Activated CD4-positive, alpha-beta T cell treated with anti-CD3 and anti-CD28 coated beads for 36 hours (primary cell): ENCODE measurements at regions of chr6 and their contacts with region 1.

Region 1: DNA sequence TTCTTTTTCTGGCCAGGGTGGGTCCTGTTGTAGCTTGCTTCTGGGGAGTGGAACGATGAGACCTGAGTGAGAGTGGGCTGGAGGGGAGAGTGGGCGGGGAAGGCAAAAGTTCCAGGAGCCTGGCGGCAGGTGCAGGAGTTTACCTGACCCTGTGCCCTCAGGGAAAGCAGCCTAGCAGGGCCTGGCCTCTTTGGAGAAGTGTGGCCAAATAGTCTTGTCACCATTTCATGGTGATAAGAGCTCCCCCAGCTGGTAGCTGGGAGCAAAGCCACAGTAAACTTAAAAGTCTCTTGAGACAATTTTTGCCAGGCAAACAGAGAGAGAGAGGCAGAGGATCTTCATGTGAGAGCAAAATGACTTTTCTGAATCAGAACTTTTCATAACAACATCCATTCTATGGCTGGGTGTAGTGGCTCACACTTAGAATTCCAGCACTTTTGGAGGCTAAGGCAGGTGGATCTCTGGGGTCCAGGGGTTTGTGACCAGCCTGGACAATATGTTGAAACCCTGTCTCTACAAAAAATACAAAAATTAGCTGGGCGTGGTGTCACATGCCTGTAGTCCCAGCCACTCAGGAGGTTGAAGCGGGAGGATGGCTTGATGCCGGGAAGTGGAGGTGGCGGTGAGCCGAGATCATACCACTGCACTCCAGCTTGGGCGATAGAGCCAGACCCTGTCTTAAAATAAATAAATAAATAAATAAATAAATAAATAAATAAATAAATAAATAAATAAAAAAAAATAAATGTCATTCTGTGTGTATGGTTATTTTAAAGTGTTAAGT is 161.8 kb upstream of the SCGN start:
- DNase-seq: peak; percentile 81
- ATAC-seq: peak; percentile 86
- H3K4me3 Mint-ChIP-seq: no peak overlapping the region
- H3K27ac Mint-ChIP-seq: no peak overlapping the region
- H3K4me1 Mint-ChIP-seq: peaks cover 4% of the 10 kb centered on the region
- H3K27me3 Mint-ChIP-seq: no peaks in the 10 kb centered on the region

Region 2: DNA sequence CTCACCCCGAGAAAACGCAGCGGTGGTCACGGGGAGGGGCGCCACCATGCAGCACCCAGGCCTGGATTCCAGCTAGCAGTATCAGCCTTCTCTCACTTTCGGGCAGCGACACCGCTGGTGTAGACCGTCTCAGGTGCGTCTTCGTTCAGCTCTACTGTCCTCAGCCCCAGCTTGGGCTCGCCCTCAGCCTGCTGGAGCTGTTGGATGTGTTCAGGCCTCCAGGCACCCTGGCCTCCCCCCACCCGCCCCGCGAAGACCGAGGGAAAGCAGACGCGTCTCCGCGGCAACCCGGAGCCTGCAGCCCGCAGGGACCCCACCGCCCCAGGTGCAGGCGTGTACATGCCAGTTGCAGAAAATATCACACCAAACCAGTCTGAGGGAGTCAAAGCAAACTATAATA is 271.9 kb before region 1 on chr6:
- CTCF ChIA-PET with region 1: interaction called, 40 read pairs
- POLR2A ChIA-PET with region 1: no interaction called
- intact Hi-C with region 1: loop called (anchors 1 kb)
- DNase-seq: no peak
- ATAC-seq: no peak
- H3K4me3 Mint-ChIP-seq: no peak overlapping the region
- H3K27ac Mint-ChIP-seq: no peak overlapping the region
- H3K4me1 Mint-ChIP-seq: no peaks in the 10 kb centered on the region
- H3K27me3 Mint-ChIP-seq: no peaks in the 10 kb centered on the region

Region 3: GRCh38 chr6:25278914-25279747 is 211.1 kb before region 1 on chr6 and contains the start of gene CARMIL1:
- CTCF ChIA-PET with region 1: interaction called, 43 read pairs
- POLR2A ChIA-PET with region 1: no interaction called
- intact Hi-C with region 1: loop called in 1 of 2 experiments (anchors 1 kb)
- DNase-seq: peak; percentile 82
- ATAC-seq: peak; percentile 75
- H3K4me3 Mint-ChIP-seq: peak within 1 kb of the TSS; percentile 82
- H3K27ac Mint-ChIP-seq: peak within 1 kb of the TSS; percentile 79
- H3K4me1 Mint-ChIP-seq: peaks cover 38% of the 10 kb centered on the region
- H3K27me3 Mint-ChIP-seq: peaks cover 5% of the 10 kb centered on the region
- total RNA-seq, gene CARMIL1: 4.5 to 4.9 TPM

Region 4: DNA sequence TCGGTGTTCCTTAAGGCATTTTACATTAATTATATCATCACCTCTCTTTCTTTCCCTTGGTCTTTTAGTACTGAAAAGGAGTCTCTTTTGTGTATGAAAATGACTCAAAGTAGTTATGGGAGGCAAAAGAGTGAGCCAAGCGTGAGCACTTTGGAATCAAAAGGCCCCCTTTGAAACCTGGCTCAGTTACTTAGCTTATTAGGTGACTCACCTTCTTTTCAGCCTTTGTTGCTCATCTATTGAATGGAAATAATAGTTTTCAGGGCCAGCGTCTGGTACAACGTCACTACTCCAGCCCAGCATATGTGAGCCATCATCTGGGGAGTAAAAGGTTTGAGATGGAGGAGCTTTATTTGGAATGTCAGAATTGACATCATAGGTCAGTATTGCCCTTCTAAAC is 14.5 kb after region 1 on chr6:
- CTCF ChIA-PET with region 1: interaction called, 17 read pairs
- POLR2A ChIA-PET with region 1: no interaction called
- intact Hi-C with region 1: no loop called
- DNase-seq: no peak
- ATAC-seq: no peak
- H3K4me3 Mint-ChIP-seq: no peak overlapping the region
- H3K27ac Mint-ChIP-seq: no peak overlapping the region
- H3K4me1 Mint-ChIP-seq: no peaks in the 10 kb centered on the region
- H3K27me3 Mint-ChIP-seq: no peaks in the 10 kb centered on the region

Region 5: DNA sequence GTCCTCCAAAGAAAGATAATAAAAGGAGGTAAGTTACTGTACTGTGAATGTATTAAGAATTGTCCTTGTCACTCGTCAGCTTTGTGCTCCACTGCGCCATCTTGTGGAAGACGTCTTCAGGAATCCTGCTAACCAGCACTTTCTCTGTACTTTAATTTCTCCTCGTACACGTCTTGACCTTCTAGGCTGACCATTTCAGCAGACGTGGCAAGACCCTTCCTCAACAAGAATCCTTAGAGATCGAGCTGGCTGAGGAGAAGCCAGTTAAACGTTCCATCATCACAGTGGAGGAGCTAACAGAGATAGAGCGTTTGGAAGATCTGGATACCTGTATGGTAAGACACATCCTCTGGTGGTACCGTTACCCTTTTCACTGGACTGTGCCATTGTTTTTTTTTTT is 66.3 kb after region 1 on chr6:
- CTCF ChIA-PET with region 1: interaction called, 20 read pairs
- POLR2A ChIA-PET with region 1: no interaction called
- intact Hi-C with region 1: no loop called
- DNase-seq: peak; percentile 90
- ATAC-seq: peak; percentile 66
- H3K4me3 Mint-ChIP-seq: no peak overlapping the region
- H3K27ac Mint-ChIP-seq: no peak overlapping the region
- H3K4me1 Mint-ChIP-seq: peaks cover 2% of the 10 kb centered on the region
- H3K27me3 Mint-ChIP-seq: no peaks in the 10 kb centered on the region

Region 6: GRCh38 chr6:25601800-25602673 is 111.8 kb after region 1 on chr6:
- CTCF ChIA-PET with region 1: interaction called, 3 read pairs
- POLR2A ChIA-PET with region 1: no interaction called
- intact Hi-C with region 1: loop called (anchors 2 to 5 kb)
- DNase-seq: no peak
- ATAC-seq: no peak
- H3K4me3 Mint-ChIP-seq: no peak overlapping the region
- H3K27ac Mint-ChIP-seq: no peak overlapping the region
- H3K4me1 Mint-ChIP-seq: no peaks in the 10 kb centered on the region
- H3K27me3 Mint-ChIP-seq: no peaks in the 10 kb centered on the region